Prostate gland (tissue), 2 donors: ENCODE measurements at regions of chr1 and their contacts with region 1.

Region 1: DNA sequence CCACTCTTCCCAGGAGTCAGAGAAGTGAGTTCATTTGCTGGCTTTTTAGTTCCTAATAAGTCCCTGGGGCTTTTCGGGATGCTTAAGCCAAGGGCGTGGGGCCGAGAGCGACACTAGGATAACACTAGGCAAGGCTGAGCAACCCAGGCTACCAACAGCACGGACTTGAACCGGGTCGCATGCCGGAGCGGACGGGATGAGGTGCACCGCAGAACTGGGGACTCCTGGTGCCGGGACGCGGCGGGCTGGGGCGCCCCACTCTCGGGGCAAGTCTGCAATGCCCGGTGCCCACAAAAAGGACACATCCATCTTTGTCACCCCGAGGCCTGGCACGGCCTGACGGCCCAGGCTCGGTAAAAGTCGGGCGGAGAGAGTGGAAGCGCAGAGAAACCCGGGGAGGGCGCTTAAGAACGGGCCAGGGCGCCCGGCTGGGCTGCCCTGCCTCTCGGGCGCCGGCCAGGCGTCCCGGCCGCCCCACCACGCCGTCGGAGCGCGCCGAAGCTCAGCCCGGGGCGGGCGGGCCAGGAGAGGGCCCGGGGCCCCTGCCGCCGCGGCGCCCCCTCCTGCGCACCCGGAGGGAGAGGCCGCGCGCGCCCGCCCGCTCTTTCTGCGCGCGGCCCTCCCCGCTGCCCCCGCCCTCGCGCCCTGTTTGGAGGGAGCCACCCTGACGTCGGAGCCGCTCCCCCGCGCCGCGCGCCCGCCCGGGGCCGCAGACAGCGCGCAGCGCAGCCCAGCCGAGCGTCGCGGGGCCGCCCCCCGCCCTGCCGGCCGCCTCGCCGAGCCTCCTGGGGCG is at the start of gene NBL1:
- DNase-seq: peak; percentile 84
- H3K4me3 ChIP-seq: peak within 1 kb of the TSS; percentile 81 to 94
- H3K27ac ChIP-seq: peak within 1 kb of the TSS; percentile 99
- H3K4me1 ChIP-seq: peaks cover 14% of the 10 kb centered on the region
- H3K27me3 ChIP-seq: no peaks in the 10 kb centered on the region
- CTCF ChIP-seq: peak in 1 of 4 experiments; percentile 9
- POLR2A ChIP-seq: peak; percentile 20
- total RNA-seq, gene NBL1: 268 to 514 TPM

Region 2: GRCh38 chr1:19439464-19440171 is 204.2 kb before region 1 on chr1:
- intact Hi-C with region 1: loop called (anchors 5 kb)
- DNase-seq: peak; percentile 62
- H3K4me3 ChIP-seq: no peak overlapping the region
- H3K27ac ChIP-seq: peak overlapping the region; percentile 83 to 96
- H3K4me1 ChIP-seq: peaks cover 54% of the 10 kb centered on the region
- H3K27me3 ChIP-seq: no peaks in the 10 kb centered on the region
- CTCF ChIP-seq: peak in 3 of 4 experiments; percentile 35 to 60 (median 42)
- POLR2A ChIP-seq: no peak

Region 3: GRCh38 chr1:19596714-19597495 is 46.9 kb before region 1 on chr1:
- intact Hi-C with region 1: loop called (anchors 2 kb)
- DNase-seq: peak; percentile 96
- H3K4me3 ChIP-seq: peak overlapping the region; percentile 69 to 75
- H3K27ac ChIP-seq: peak overlapping the region; percentile 93 to 95
- H3K4me1 ChIP-seq: peaks cover 17% of the 10 kb centered on the region
- H3K27me3 ChIP-seq: no peaks in the 10 kb centered on the region
- CTCF ChIP-seq: no peak
- POLR2A ChIP-seq: peak; percentile 65

Region 4: DNA sequence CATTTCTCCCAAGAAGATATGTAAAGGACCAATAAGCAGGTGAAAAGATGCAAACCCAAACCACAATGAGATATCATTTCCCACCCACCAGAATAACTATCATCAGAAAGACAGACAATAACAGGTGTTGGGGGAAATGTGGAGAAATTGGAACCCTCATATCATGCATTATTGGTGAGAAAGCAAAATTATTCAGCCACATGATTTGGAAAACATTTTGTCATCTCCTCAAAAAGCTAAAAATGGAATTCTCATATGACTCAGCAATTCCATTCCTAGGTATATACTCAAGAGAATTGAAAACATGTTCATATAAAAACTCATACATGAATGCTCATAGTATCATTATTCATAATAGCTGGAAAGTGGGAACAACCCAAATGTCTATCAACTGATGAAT is 196.4 kb after region 1 on chr1:
- intact Hi-C with region 1: no loop called
- DNase-seq: no peak
- H3K4me3 ChIP-seq: no peak overlapping the region
- H3K27ac ChIP-seq: no peak overlapping the region
- H3K4me1 ChIP-seq: no peaks in the 10 kb centered on the region
- H3K27me3 ChIP-seq: no peaks in the 10 kb centered on the region
- CTCF ChIP-seq: no peak
- POLR2A ChIP-seq: no peak

Region 5: DNA sequence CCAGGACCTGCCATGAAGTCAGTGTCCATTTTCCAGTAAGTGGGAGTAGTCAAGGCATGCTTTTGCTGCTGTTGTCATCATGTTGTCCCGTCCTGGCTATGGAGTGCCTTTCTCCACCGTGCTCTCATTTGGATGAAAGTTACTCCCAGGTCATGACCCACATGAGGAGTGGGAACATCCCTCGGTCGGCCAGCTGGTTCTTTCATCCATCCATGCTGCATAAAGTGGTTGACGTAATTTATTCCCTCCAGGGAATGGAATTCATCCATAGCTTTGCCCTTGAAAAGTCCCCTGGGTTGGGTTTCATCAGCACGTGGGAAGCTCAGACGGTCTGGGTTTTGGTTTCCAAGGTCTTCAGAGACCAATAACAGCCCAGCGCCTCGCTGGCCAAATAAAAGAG is 324.0 kb after region 1 on chr1:
- intact Hi-C with region 1: no loop called
- DNase-seq: no peak
- H3K4me3 ChIP-seq: no peak overlapping the region
- H3K27ac ChIP-seq: no peak overlapping the region
- H3K4me1 ChIP-seq: no peaks in the 10 kb centered on the region
- H3K27me3 ChIP-seq: no peaks in the 10 kb centered on the region
- CTCF ChIP-seq: no peak
- POLR2A ChIP-seq: no peak